K562 (cell line): ENCODE measurements at regions of chr7 and their contacts with region 1.

Region 1: GRCh38 chr7:100271716-100272537 is 35.6 kb upstream of the SPDYE3 start:
- DNase-seq: peak; percentile 91 to 99 (median 95)
- ATAC-seq: peak; percentile 88
- H3K4me3 ChIP-seq: peak overlapping the region; percentile 60
- H3K27ac ChIP-seq: peak overlapping the region; percentile 38; the same call in 2 of the 3 replicates
- H3K4me1 ChIP-seq: peaks cover 16 to 37% of the 10 kb centered on the region in 2 experiments
- H3K27me3 ChIP-seq: no peaks in the 10 kb centered on the region
- CTCF ChIP-seq: peak in 2 of 3 experiments; percentile 49 to 61; a peak in 5 of 6 replicates
- EP300 ChIP-seq: no peak
- POLR2A ChIP-seq: peak; percentile 40; the same call in 1 of the 2 replicates
- RAD21 ChIP-seq: peak in 1 of 2 experiments; percentile 36; a peak in 3 of 4 replicates

Region 2: GRCh38 chr7:100158229-100159098 is 113.5 kb before region 1 on chr7 and contains the start of gene TRAPPC14:
- CTCF ChIA-PET with region 1: no interaction called
- POLR2A ChIA-PET with region 1: no interaction called
- in situ Hi-C with region 1: no loop called
- intact Hi-C with region 1: loop called (anchors 5 kb)
- DNase-seq: peak; percentile 97 to 100 (median 98)
- ATAC-seq: peak; percentile 87
- H3K4me3 ChIP-seq: peak within 1 kb of the TSS; percentile 99
- H3K27ac ChIP-seq: peak within 1 kb of the TSS; percentile 91
- H3K4me1 ChIP-seq: peaks cover 35 to 74% of the 10 kb centered on the region in 2 experiments
- H3K27me3 ChIP-seq: no peaks in the 10 kb centered on the region
- CTCF ChIP-seq: no peak
- EP300 ChIP-seq: peak; percentile 55; the same call in 1 of the 2 replicates
- POLR2A ChIP-seq: peak; percentile 90
- RAD21 ChIP-seq: peak in 1 of 2 experiments; percentile 8; a peak in 1 of 4 replicates
- polyA plus RNA-seq, gene TRAPPC14: 0.42 to 0.55 TPM